ENCODE measurements at regions of chr1 and their contacts with region 1.

Region 1: DNA sequence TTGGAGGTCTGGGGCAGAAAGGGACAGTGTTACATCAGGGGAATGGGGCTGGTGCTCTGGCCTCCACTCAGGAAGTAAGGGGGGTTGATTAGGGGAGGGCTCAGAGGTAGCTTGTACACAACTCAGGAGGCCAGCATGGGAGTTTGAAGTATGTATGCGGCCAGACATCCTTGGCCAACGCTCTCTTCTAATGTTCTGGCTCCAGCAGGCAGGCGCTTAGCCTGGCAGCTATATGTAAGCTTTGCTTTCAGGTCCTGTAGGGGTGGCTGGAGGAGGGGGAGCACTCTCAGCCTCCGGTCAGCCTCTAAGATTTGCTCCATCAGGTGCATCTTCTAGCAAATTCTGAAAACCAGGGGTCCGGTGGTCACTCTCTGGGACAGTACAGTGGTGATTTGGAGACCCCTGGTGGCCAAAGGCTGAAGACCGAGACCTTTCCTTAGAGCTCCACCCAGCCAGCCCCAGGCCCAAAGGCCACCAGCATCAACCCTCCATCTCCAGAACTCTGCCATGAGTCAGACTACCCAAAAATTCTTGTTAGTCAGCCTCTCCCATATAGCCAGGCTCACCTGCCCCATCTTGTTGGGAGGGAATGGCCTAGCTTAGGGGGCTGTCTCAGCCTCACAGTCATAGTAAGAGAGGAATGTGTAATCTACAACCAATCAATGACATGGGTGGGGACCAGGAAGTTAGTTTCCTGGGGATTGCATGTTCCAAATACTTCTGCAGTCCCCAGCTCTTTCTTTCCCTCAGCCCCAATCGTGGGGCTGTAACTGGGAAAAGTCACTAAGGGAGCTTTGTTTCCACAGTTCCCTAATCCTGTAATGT is 9.7 kb upstream of the COL8A2 start:
- DNase-seq: peak; percentile 54
- H3K4me3 ChIP-seq: no peak overlapping the region
- H3K27ac ChIP-seq: peak overlapping the region; percentile 95
- H3K4me1 ChIP-seq: peaks cover 42% of the 10 kb centered on the region
- H3K27me3 ChIP-seq: no peaks in the 10 kb centered on the region
- CTCF ChIP-seq: peak; percentile 81 to 82
- POLR2A ChIP-seq: peak; percentile 64

Region 2: GRCh38 chr1:34865981-34866761 is 1268.5 kb before region 1 on chr1:
- CTCF ChIA-PET with region 1: no interaction called
- POLR2A ChIA-PET with region 1: no interaction called
- dilution Hi-C with region 1: no loop called
- intact Hi-C with region 1: no loop called
- DNase-seq: peak; percentile 63
- H3K4me3 ChIP-seq: peak overlapping the region; percentile 49 to 76 (median 70)
- H3K27ac ChIP-seq: peak overlapping the region; percentile 46
- H3K4me1 ChIP-seq: peaks cover 7% of the 10 kb centered on the region
- H3K27me3 ChIP-seq: peaks cover 12 to 18% of the 10 kb centered on the region in 2 experiments
- CTCF ChIP-seq: peak; percentile 93 to 97
- POLR2A ChIP-seq: peak; percentile 32

Region 3: DNA sequence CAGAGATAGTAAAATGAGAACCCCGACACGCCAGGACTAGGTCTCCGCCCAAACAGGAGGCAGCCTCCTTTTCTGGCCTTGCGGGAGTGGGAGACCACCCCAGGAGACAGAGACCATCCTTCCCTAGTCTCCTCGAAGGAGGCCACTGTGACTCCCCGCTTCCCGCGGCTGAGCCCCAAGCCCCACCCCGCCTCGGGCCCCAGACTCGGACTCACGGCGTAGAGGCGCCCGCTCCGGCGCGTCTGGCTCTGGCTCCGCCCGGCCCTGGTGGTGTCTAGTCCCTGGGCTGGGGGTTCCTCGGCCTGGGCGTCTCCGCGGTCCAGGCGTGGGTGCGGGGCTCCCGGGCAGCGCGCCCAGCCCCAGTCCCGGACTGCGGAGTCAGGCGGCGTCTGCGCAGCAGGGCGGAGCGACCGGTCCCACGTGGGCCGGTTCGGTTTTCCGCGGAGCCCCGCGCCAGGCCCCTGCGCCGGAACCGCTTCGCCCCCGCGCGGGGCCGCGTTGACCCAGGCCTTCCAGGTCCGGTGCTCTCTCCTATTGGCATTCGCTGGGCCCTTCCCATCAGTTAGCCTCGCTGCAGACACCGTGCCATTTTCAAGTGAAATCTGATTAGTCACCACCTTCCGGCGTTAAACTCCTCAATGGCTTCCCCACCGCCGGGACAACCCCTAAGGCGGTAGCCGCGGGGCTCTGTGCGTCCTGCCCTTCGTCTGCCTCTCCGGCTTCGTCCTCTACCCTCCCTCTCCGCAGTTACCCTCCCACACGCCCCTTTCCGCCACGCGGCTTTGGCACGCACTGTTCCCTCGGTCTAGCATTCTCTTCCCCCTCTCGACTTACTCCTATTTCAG is 416.0 kb before region 1 on chr1 and contains the start of gene C1orf216:
- CTCF ChIA-PET with region 1: no interaction called
- POLR2A ChIA-PET with region 1: no interaction called
- dilution Hi-C with region 1: no loop called
- intact Hi-C with region 1: no loop called
- DNase-seq: peak; percentile 77
- H3K4me3 ChIP-seq: peak within 1 kb of the TSS; percentile 65 to 84 (median 77)
- H3K27ac ChIP-seq: peak within 1 kb of the TSS; percentile 42
- H3K4me1 ChIP-seq: peaks cover 13% of the 10 kb centered on the region
- H3K27me3 ChIP-seq: no peaks in the 10 kb centered on the region
- CTCF ChIP-seq: no peak
- POLR2A ChIP-seq: peak; percentile 86
- total RNA-seq, gene C1orf216: 15.3 and 18.5 TPM in 2 replicates

Region 4: GRCh38 chr1:36099681-36100341 is 34.9 kb before region 1 on chr1:
- CTCF ChIA-PET with region 1: interaction called, 233 read pairs
- POLR2A ChIA-PET with region 1: no interaction called
- dilution Hi-C with region 1: no loop called
- intact Hi-C with region 1: loop called (anchors 1 kb)
- DNase-seq: peak; percentile 65
- H3K4me3 ChIP-seq: no peak overlapping the region
- H3K27ac ChIP-seq: no peak overlapping the region
- H3K4me1 ChIP-seq: no peaks in the 10 kb centered on the region
- H3K27me3 ChIP-seq: no peaks in the 10 kb centered on the region
- CTCF ChIP-seq: peak; percentile 84
- POLR2A ChIP-seq: no peak

Region 5: GRCh38 chr1:36115200-36115669 is 19.5 kb before region 1 on chr1:
- CTCF ChIA-PET with region 1: interaction called, 24 read pairs
- POLR2A ChIA-PET with region 1: no interaction called
- dilution Hi-C with region 1: no loop called
- intact Hi-C with region 1: no loop called
- DNase-seq: no peak
- H3K4me3 ChIP-seq: no peak overlapping the region
- H3K27ac ChIP-seq: no peak overlapping the region
- H3K4me1 ChIP-seq: no peaks in the 10 kb centered on the region
- H3K27me3 ChIP-seq: no peaks in the 10 kb centered on the region
- CTCF ChIP-seq: no peak
- POLR2A ChIP-seq: no peak

Region 6: GRCh38 chr1:36123356-36123755 is 11.4 kb before region 1 on chr1:
- CTCF ChIA-PET with region 1: interaction called, 15 read pairs
- POLR2A ChIA-PET with region 1: no interaction called
- dilution Hi-C with region 1: no loop called
- intact Hi-C with region 1: no loop called
- DNase-seq: no peak
- H3K4me3 ChIP-seq: no peak overlapping the region
- H3K27ac ChIP-seq: no peak overlapping the region
- H3K4me1 ChIP-seq: no peaks in the 10 kb centered on the region
- H3K27me3 ChIP-seq: peaks cover 5 to 9% of the 10 kb centered on the region in 2 experiments
- CTCF ChIP-seq: no peak
- POLR2A ChIP-seq: no peak

Region 7: DNA sequence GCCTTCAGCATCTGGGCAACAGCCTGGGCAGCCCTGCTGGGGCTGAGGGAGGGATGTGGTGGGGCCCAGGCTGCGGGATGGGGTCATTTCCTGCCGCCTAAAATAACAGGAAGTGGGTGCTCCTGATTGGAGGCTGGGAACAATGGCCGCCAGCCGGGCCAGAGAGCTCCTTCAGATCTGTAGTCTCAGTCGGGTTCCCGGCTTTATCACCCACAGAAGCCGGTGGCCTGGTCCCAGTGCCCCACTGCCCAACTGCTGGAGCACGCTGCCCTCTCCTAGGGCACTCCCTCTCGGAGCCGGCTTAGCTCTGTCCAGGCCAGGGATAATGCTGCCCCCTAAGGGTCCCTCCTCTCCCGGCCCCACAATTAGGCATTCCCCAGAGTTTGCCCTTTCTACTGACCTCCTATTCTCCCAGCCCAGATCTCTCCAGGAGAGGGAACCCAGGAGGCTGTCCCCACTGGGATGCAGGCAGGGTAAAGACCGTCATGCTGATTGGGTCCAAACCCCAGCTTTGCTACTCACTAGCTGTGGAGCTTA is 26.3 kb after region 1 on chr1:
- CTCF ChIA-PET with region 1: interaction called, 13 read pairs
- POLR2A ChIA-PET with region 1: no interaction called
- dilution Hi-C with region 1: no loop called
- intact Hi-C with region 1: loop called (anchors 1 kb)
- DNase-seq: peak; percentile 83
- H3K4me3 ChIP-seq: peak overlapping the region; percentile 26 to 66 (median 36)
- H3K27ac ChIP-seq: peak overlapping the region; percentile 97
- H3K4me1 ChIP-seq: peaks cover 51% of the 10 kb centered on the region
- H3K27me3 ChIP-seq: no peaks in the 10 kb centered on the region
- CTCF ChIP-seq: peak; percentile 29 to 36
- POLR2A ChIP-seq: peak; percentile 86

Region 8: DNA sequence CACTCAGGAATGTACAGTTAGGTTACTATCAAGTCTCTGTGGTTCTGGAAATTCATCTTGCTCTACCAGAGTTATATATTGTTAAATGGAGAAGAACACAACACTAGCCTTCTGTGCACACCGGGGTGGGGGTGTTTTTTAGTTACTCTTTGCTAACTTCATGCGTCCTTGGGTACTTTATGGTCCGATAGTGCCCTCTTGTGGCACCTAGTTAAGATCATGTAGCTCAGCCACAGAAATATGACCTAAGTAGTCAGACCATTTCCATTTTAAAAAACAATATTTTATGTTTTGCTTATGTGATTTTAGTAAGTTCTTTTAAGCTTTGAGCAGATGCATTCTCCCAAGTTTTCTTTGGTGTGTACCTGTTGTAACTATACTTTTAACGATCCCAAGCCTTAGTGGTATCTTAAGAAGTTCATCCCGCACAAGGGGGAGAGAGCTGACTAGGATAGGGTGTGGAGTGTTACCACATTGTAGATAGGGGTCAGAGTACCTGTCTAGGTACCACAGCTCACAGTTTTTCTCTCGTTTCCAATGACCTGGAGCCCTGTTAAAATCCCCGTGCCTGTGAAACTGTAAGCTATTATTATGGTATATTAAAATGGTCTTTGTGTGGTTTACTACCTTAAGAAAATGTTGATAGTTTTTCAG is 150.9 kb after region 1 on chr1:
- CTCF ChIA-PET with region 1: interaction called, 29 read pairs
- POLR2A ChIA-PET with region 1: no interaction called
- dilution Hi-C with region 1: no loop called
- intact Hi-C with region 1: no loop called
- DNase-seq: peak; percentile 79
- H3K4me3 ChIP-seq: no peak overlapping the region
- H3K27ac ChIP-seq: no peak overlapping the region
- H3K4me1 ChIP-seq: no peaks in the 10 kb centered on the region
- H3K27me3 ChIP-seq: no peaks in the 10 kb centered on the region
- CTCF ChIP-seq: peak; percentile 57 to 59
- POLR2A ChIP-seq: no peak

Measured in endothelial cell of umbilical vein (primary cell).